SK-N-SH (cell line): ENCODE measurements at regions of chr6 and their contacts with region 1.

Region 1: GRCh38 chr6:126054258-126054702 is 67.9 kb downstream of the TRMT11 start:
- DNase-seq: peak; percentile 14
- H3K4me3 ChIP-seq: no peak overlapping the region
- H3K27ac ChIP-seq: no peak overlapping the region
- H3K4me1 ChIP-seq: peaks cover 0 to 11% of the 10 kb centered on the region in 2 experiments; a peak in 2 of 4 replicates
- H3K27me3 ChIP-seq: no peaks in the 10 kb centered on the region
- CTCF ChIP-seq: no peak
- EP300 ChIP-seq: peak; percentile 62 to 78; a peak in 3 of 4 replicates
- RAD21 ChIP-seq: peak; percentile 28

Region 2: DNA sequence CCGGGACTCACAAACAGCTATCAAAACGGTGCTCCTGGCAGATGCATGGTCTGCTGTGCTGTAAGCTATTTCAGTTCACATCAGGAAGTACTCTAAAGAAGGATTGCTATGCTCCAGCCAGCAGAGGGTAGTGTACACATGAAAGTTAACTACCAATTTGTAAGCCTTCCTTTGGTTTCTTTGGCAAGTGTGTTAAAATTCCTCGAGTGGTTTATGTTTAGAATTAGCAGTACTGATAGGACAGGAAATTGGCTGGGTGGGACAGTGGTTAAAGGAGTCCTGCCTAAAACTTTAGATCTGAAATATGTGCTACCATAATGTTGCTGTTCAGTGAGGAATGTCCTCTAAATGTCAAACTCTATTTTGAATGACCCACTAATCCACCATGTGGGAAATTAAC is 20.6 kb before region 1 on chr6:
- CTCF ChIA-PET with region 1: interaction called, 12 read pairs
- POLR2A ChIA-PET with region 1: no interaction called
- DNase-seq: peak; percentile 41
- H3K4me3 ChIP-seq: no peak overlapping the region
- H3K27ac ChIP-seq: no peak overlapping the region
- H3K4me1 ChIP-seq: no peaks in the 10 kb centered on the region; a peak in 2 of 4 replicates
- H3K27me3 ChIP-seq: no peaks in the 10 kb centered on the region
- CTCF ChIP-seq: peak; percentile 72
- EP300 ChIP-seq: 0 out of 4 replicates have a peak, but pooled peaks of 1 of the 2 experiments have one; percentile 17
- RAD21 ChIP-seq: peak; percentile 87